OCI-LY7 (cell line): ENCODE measurements at regions of chr21 and their contacts with region 1.

Region 1: GRCh38 chr21:32682696-32683474 is 44.9 kb downstream of the SYNJ1 start:
- DNase-seq: no peak
- H3K4me3 ChIP-seq: no peak overlapping the region
- H3K27ac ChIP-seq: no peak overlapping the region
- H3K4me1 ChIP-seq: no peaks in the 10 kb centered on the region
- CTCF ChIP-seq: no peak

Region 2: DNA sequence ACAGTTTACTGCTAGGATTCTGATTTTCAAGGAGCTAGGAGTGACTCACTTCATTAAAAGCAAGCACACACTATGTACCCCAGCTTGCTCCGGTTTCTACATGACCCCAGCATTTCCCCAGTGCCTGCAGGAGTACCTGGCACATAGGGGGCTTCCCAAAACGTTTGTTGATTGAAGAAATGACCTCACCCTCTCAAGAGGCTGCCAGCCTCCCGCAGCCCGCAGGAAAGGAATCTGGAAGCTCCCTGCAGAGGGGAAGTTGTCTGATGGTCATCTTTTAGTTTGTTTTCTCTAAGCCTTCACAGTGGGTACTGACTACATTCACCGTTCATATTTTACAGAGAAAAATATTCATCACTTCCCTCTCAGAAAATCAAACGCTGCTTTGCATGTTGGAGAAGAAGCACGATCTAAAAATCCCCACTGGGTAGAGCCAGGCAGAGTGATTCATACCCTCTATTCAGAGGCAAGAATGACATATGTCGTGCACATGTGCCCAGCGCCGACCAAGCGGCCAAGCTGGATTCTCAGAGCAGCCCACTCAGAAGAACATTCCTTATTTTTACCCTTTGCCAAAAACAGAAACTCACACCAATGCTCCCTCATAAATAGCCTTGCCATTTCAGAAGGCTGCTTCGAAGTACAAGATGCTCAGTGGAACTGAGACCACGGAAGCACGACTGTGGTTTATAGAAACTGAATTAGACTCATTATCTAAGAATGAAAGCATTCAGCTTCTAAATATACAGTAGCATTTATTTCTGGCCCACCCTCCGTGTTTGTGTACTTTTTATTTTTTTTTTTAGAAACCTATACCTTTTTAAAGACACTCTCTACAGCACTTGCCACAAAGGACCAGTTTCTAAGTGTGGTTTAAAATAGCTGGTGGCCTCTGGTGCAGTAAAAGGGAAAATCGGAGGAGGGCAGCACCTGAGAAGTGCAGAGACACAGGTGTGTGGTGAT is 547.2 kb before region 1 on chr21:
- CTCF ChIA-PET with region 1: no interaction called
- POLR2A ChIA-PET with region 1: no interaction called
- intact Hi-C with region 1: no loop called
- DNase-seq: no peak
- H3K4me3 ChIP-seq: no peak overlapping the region
- H3K27ac ChIP-seq: no peak overlapping the region
- H3K4me1 ChIP-seq: no peaks in the 10 kb centered on the region
- CTCF ChIP-seq: no peak

Region 3: GRCh38 chr21:32698971-32699693 is 16.2 kb after region 1 on chr21:
- CTCF ChIA-PET with region 1: no interaction called
- POLR2A ChIA-PET with region 1: interaction called, 14 read pairs
- intact Hi-C with region 1: no loop called
- DNase-seq: no peak
- H3K4me3 ChIP-seq: no peak overlapping the region
- H3K27ac ChIP-seq: no peak overlapping the region
- H3K4me1 ChIP-seq: no peaks in the 10 kb centered on the region
- CTCF ChIP-seq: no peak